HEK293 (cell line): ENCODE measurements at regions of chr1 and their contacts with region 1.

Region 1: DNA sequence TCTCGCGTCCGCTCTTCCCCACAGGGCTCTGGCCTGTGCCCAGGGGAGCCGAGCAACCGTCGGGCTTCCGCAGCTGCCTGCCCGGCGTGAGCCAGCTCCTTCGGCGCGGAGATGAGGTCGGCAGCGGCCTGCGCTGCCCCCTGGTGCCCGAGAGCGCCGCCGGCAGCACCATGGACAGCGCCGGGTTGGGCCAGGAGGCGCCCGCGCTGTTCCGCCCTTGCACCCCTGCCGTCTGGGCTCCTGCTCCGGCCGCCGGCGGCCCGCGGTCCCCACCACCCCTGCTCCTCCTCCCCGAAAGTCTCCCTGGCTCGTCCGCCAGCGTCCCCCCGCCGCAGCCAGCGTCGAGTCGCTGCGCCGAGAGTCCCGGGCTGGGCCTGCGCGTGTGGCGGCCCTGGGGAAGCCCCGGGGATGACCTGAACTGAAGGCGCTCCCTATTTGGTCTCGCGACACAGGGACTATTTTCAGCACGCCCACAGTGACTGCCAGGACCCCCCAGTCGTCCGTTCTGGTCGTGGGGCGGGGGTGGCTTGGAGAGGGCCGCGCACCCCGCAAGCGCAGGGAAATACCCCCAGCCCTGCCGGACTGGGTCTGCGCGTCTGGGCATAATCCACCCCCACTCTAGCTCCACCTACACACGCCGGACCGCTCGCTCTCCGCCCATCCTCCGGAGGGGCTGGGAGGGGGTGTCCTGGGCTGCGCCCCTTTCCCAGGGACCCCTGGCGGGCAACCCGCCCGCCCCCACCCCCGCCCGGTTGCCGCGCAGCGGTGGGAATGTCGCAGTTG is 1.3 kb downstream of the HES3 start:
- H3K4me3 ChIP-seq: peak overlapping the region; percentile 20
- H3K27ac ChIP-seq: no peak overlapping the region
- H3K4me1 ChIP-seq: no peaks in the 10 kb centered on the region; the same call in 1 of the 2 replicates
- CTCF ChIP-seq: peak; percentile 91

Region 2: DNA sequence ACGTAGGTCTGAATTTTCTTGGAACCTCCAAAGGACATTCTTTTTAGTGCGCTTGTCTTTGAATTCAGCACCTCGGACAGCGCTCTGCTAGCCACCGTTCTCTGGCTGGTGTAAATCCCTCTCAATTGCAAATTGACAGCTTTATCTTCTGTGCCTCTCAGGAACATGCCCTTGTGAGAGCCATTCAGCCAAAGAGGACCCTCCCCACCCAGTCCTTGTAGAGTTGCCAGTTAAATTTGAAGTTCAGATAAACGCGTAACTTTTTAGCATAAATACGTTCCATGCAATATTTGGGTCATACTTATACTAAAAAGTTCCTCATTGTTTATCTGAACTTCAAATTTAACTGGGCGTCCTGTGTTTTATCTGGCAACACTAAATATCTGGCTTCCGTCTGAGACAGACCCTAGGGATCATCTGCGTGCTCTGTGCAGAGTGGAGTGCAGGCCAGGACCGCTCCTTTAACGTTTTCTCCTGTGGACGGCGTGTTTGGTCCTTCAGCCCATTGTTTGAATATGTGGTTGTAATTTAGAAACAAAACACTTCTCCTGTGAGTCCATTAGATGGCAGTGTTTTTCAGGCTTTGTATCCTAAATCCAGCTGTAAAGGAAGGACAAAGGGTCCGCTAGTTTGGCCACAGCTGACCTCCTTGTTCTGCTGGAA is 192.6 kb before region 1 on chr1:
- CTCF ChIA-PET with region 1: interaction called, 12 read pairs
- POLR2A ChIA-PET with region 1: no interaction called
- H3K4me3 ChIP-seq: no peak overlapping the region
- H3K27ac ChIP-seq: no peak overlapping the region
- H3K4me1 ChIP-seq: no peaks in the 10 kb centered on the region
- CTCF ChIP-seq: no peak

Region 3: DNA sequence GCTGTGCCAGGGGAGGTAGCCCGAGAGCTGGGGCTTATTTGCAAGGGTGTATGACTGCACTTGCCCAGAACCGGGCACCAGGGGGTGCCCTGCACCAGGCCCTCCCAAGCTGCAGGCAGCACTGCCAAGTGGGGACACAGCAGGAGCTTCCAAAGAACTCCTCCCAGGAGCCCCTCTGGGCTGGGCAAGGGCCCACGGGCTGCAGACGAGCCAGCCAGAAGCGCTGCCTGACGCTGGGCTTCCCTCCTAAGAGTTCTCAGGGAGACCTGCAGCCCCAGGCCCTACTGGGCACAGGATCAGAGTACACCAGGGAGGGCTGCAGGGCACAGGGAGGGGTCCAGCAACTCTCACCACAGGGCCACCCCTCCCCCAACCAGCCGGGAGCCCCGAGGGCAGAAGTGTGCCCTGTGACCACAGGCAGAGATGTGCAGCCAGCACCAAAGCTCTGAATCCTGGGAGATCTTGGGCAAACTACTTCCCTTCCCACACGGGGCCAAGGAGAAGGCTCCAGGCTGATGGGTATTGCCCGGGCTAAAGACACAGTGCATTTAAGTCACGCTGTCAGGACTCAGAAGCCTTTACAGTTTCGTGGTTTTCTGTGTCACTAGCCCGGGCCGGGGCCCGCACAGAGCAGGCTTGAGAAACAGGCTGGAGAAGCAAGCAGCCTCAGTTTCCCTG is 136.2 kb before region 1 on chr1:
- CTCF ChIA-PET with region 1: no interaction called
- POLR2A ChIA-PET with region 1: no interaction called
- H3K4me3 ChIP-seq: no peak overlapping the region
- H3K27ac ChIP-seq: no peak overlapping the region
- H3K4me1 ChIP-seq: no peaks in the 10 kb centered on the region
- CTCF ChIP-seq: peak; percentile 92

Region 4: GRCh38 chr1:6313393-6314209 is 68.3 kb after region 1 on chr1:
- CTCF ChIA-PET with region 1: interaction called, 14 read pairs
- POLR2A ChIA-PET with region 1: no interaction called
- H3K4me3 ChIP-seq: no peak overlapping the region
- H3K27ac ChIP-seq: no peak overlapping the region
- H3K4me1 ChIP-seq: no peaks in the 10 kb centered on the region
- CTCF ChIP-seq: no peak

Region 5: GRCh38 chr1:6359216-6360116 is 114.2 kb after region 1 on chr1:
- CTCF ChIA-PET with region 1: interaction called, 24 read pairs
- POLR2A ChIA-PET with region 1: no interaction called
- H3K4me3 ChIP-seq: no peak overlapping the region
- H3K27ac ChIP-seq: 0 out of 2 replicates have a peak overlapping the region, but pooled peaks have one; percentile 34
- H3K4me1 ChIP-seq: peaks cover 8% of the 10 kb centered on the region; the same call in 1 of the 2 replicates
- CTCF ChIP-seq: peak; percentile 24; the same call in 1 of the 2 replicates

Region 6: DNA sequence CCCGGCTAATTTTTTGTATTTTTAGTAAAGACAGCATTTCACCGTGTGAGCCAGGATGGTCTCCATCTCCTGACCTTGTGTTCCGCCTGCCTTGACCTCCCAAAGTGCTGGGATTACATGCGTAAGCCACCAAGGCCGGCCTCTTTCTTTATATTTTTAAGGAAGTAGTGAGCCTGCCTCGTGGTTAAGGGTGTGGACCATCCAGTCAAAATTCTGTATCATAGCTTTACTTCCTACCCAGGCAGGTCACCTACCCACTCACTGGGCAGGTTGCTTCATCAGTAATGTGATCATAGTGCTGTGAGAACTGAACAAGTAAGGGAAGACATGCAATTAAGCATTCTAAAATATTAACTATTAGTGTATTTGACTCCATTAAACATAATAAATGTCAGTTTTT is 156.4 kb after region 1 on chr1:
- CTCF ChIA-PET with region 1: interaction called, 68 read pairs
- POLR2A ChIA-PET with region 1: no interaction called
- H3K4me3 ChIP-seq: no peak overlapping the region
- H3K27ac ChIP-seq: no peak overlapping the region
- H3K4me1 ChIP-seq: no peaks in the 10 kb centered on the region
- CTCF ChIP-seq: no peak

Region 7: GRCh38 chr1:6414443-6414844 is 169.2 kb after region 1 on chr1:
- CTCF ChIA-PET with region 1: interaction called, 23 read pairs
- POLR2A ChIA-PET with region 1: no interaction called
- H3K4me3 ChIP-seq: no peak overlapping the region
- H3K27ac ChIP-seq: peak overlapping the region; percentile 26; the same call in 1 of the 2 replicates
- H3K4me1 ChIP-seq: no peaks in the 10 kb centered on the region; the same call in 1 of the 2 replicates
- CTCF ChIP-seq: peak; percentile 84

Region 8: GRCh38 chr1:6438047-6438525 is 192.8 kb after region 1 on chr1:
- CTCF ChIA-PET with region 1: interaction called, 26 read pairs
- POLR2A ChIA-PET with region 1: no interaction called
- H3K4me3 ChIP-seq: no peak overlapping the region
- H3K27ac ChIP-seq: no peak overlapping the region
- H3K4me1 ChIP-seq: no peaks in the 10 kb centered on the region
- CTCF ChIP-seq: peak; percentile 77